Tibial artery (tissue), 4 donors: ENCODE measurements at regions of chr18 and their contacts with region 1.

Region 1: DNA sequence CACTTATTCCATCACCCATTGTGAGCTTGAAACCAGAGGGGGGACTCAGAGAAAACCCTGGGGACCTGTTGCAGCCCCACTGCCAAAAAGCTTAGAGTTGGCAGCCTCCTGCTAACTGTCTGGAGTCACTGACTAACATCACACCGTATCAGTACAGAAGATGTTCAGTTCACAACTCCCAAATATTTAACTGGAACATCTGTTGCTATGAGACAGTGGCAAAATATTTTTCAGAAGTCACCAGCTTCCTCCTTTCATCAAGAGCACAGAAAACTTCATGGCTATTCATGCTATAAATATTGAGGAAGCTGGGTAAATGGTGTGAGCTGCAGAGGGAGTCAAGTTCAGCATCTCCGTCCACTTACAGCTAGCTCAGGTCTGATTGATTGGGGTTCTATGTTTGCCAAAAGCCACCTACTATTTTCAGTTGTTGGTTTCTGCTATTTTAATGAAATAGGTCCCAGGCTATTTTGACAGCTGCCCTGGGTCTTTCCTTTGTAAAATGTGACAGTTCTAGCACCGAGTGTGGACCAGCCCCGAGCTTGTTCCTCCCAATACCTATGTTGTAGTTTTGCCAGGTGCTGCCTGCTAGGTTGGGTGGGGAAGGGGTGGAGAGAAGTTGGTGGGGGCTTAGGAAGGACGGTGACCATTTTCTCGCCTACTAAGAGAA is 9.8 kb downstream of the TUBB6 start:
- DNase-seq: no peak
- H3K4me3 ChIP-seq: no peak overlapping the region
- H3K27ac ChIP-seq: peak overlapping the region; percentile 25 to 75
- H3K4me1 ChIP-seq: peaks cover 0 to 76% (median 41%) of the 10 kb centered on the region in 4 donors
- H3K27me3 ChIP-seq: no peaks in the 10 kb centered on the region
- CTCF ChIP-seq: no peak

Region 2: GRCh38 chr18:12376718-12377555 is 59.1 kb after region 1 on chr18 and contains the start of gene AFG3L2:
- intact Hi-C with region 1: loop called (anchors 10 kb)
- DNase-seq: peak; percentile 100
- H3K4me3 ChIP-seq: peak within 1 kb of the TSS; percentile 76 to 83
- H3K27ac ChIP-seq: peak within 1 kb of the TSS; percentile 94 to 95
- H3K4me1 ChIP-seq: peaks cover 0 to 42% (median 30%) of the 10 kb centered on the region in 4 donors
- H3K27me3 ChIP-seq: no peaks in the 10 kb centered on the region
- CTCF ChIP-seq: no peak